Right cardiac atrium (tissue), 5 donors: ENCODE measurements at regions of chr3 and their contacts with region 1.

Region 1: GRCh38 chr3:166013073-166013679 is 176.0 kb upstream of the BCHE start:
- DNase-seq: no peak
- ATAC-seq: no peak
- H3K4me3 ChIP-seq: no peak overlapping the region
- H3K27ac ChIP-seq: no peak overlapping the region
- H3K4me1 ChIP-seq: no peaks in the 10 kb centered on the region
- H3K27me3 ChIP-seq: no peaks in the 10 kb centered on the region

Region 2: GRCh38 chr3:166052440-166052839 is 39.3 kb after region 1 on chr3:
- intact Hi-C with region 1: no loop called
- DNase-seq: no peak
- ATAC-seq: no peak
- H3K4me3 ChIP-seq: no peak overlapping the region
- H3K27ac ChIP-seq: no peak overlapping the region
- H3K4me1 ChIP-seq: no peaks in the 10 kb centered on the region
- H3K27me3 ChIP-seq: no peaks in the 10 kb centered on the region

Region 3: DNA sequence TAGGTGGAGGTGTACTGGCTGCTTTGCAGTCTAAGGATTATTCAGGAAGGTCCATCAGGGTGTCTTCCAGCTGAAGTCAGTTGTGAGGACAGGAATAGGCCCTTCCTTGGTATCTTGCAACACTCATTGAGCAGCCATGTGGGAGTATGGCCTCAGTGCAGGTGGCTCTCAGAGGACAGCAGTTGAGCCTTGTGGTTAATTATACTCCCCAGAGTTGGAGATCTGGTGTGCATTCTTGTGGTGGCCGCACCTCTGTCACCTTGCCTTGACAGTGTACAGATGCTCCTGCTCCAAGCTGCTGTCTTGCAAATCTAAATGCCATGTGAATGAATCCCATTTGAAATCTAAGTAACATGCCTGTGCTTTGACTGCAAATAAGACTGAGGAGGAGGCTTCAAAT is 164.0 kb after region 1 on chr3:
- intact Hi-C with region 1: no loop called
- DNase-seq: no peak
- ATAC-seq: no peak
- H3K4me3 ChIP-seq: no peak overlapping the region
- H3K27ac ChIP-seq: no peak overlapping the region
- H3K4me1 ChIP-seq: no peaks in the 10 kb centered on the region
- H3K27me3 ChIP-seq: no peaks in the 10 kb centered on the region

Region 4: GRCh38 chr3:167151636-167152035 is 1138.5 kb after region 1 on chr3:
- intact Hi-C with region 1: loop called in 1 of 4 experiments (anchors 10 kb)
- DNase-seq: no peak
- ATAC-seq: no peak
- H3K4me3 ChIP-seq: no peak overlapping the region
- H3K27ac ChIP-seq: no peak overlapping the region
- H3K4me1 ChIP-seq: no peaks in the 10 kb centered on the region
- H3K27me3 ChIP-seq: no peaks in the 10 kb centered on the region

Region 5: DNA sequence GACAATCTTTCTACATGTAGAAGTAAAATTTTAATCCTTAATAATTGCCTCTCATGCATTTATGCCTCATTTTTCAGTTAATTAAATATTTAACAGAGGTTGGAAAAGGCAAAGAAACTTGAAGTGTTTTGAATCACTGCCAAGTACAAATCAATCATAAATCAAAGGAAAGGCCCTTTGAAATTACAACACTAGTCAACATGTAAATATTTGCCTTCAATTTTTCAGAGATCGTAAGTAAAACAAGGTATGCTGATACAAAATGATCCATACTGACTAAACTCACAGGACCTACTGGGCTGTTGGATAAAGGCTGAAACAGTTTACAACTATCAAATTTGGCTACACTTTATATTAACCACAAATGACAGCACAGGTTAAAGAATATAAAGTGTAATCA is 1333.0 kb after region 1 on chr3:
- intact Hi-C with region 1: loop called in 1 of 4 experiments (anchors 10 kb)
- DNase-seq: no peak
- ATAC-seq: no peak
- H3K4me3 ChIP-seq: no peak overlapping the region
- H3K27ac ChIP-seq: no peak overlapping the region
- H3K4me1 ChIP-seq: no peaks in the 10 kb centered on the region
- H3K27me3 ChIP-seq: no peaks in the 10 kb centered on the region